WTC11 (cell line): ENCODE measurements at regions of chr1 and their contacts with region 1.

Region 1: DNA sequence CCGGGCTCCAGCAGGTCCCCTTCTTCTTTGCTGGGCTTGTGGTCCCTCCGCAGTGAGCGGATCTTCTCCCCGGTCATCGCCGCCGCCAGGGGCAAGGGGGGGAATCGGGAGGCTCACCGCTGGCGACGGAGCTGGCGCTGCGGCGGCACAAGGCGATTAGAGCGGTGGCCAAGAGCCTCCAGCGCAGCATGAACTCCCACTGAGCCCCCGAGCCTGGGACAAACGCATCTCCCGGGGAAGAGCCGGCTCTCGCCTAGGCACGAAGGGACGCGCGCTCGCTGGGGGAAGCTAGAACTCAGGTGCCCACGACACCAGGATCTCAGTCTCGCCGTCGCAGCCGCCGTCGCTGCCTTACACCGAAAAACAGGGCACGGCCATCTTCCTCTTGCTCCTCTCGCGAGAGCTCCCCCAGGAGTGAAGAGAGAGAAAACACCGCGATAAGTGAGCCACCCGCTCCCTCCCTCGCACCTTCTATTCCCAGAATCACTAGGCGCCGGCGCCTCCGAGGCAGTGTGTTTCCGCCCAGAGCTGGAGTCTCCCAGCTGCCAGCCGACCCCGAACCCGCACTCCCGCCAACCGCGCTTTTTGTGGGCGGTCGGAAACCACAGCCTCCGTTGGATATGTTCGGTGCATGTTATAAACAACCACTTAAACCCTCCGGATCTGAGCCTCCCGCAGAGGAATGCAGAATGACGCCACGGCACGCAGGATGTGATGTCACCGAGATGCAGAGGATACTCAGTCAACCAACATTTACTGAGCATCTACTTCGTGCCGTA is at the start of gene ANKRD13C:
- DNase-seq: peak; percentile 94
- ATAC-seq: peak; percentile 96
- H3K4me3 Mint-ChIP-seq: peak within 1 kb of the TSS; percentile 89
- H3K27ac Mint-ChIP-seq: peak within 1 kb of the TSS; percentile 99
- H3K4me1 Mint-ChIP-seq: peaks cover 26% of the 10 kb centered on the region
- H3K27me3 Mint-ChIP-seq: no peaks in the 10 kb centered on the region
- CTCF ChIP-seq: no peak
- total RNA-seq, gene ANKRD13C: 20.0 to 22.5 TPM (median 21.0 TPM) in 3 replicates

Region 2: GRCh38 chr1:70334436-70334835 is 20.1 kb before region 1 on chr1:
- CTCF ChIA-PET with region 1: no interaction called
- POLR2A ChIA-PET with region 1: interaction called, 10 read pairs
- DNase-seq: no peak
- ATAC-seq: no peak
- H3K4me3 Mint-ChIP-seq: no peak overlapping the region
- H3K27ac Mint-ChIP-seq: no peak overlapping the region
- H3K4me1 Mint-ChIP-seq: peaks cover 7% of the 10 kb centered on the region
- H3K27me3 Mint-ChIP-seq: no peaks in the 10 kb centered on the region
- CTCF ChIP-seq: no peak

Region 3: DNA sequence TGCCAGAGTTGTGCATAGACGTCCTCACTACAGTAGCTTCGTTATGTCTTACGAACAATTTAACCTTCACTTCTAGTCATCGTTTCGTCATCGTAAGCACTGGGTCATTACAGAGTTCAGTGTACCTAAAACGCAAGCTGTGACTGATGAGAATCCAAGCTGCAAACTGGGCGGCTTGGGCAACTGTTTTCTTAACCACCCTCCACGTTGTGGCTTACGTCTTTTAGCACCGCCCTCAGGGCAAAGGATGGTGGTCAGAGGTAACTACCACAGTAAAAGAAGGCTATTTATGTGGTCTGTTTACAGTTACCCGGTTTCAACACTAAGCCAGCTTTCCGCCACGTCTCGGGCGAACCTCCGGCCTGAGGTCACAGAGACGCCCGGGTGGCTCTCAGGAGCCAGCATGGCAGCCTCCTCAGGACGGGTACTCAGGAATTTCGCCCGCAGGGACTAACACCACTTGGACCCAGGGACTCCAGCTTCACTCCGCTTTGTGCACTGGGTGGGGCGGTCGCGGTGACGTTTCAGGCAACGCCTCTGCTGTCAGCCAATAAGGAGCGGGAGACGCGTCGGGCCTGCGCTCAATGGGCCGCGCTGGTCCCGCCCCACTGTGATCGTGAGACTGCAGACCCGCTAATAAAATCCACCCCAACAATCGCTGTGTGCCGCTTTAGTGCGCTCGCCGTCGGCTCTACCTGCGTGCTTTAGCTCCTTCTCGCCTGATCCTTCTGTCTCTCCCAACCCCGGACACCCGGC is 56.3 kb after region 1 on chr1 and contains the start of gene CTH:
- CTCF ChIA-PET with region 1: interaction called, 19 read pairs
- POLR2A ChIA-PET with region 1: interaction called, 125 read pairs
- DNase-seq: peak; percentile 99
- ATAC-seq: peak; percentile 98
- H3K4me3 Mint-ChIP-seq: peak within 1 kb of the TSS; percentile 99
- H3K27ac Mint-ChIP-seq: peak within 1 kb of the TSS; percentile 100
- H3K4me1 Mint-ChIP-seq: peaks cover 14% of the 10 kb centered on the region
- H3K27me3 Mint-ChIP-seq: no peaks in the 10 kb centered on the region
- CTCF ChIP-seq: no peak
- total RNA-seq, gene CTH: 20.8 to 27.8 TPM (median 23.9 TPM) in 3 replicates